Motor neuron (in vitro differentiated cells): ENCODE measurements at regions of chr5 and their contacts with region 1.

Region 1: DNA sequence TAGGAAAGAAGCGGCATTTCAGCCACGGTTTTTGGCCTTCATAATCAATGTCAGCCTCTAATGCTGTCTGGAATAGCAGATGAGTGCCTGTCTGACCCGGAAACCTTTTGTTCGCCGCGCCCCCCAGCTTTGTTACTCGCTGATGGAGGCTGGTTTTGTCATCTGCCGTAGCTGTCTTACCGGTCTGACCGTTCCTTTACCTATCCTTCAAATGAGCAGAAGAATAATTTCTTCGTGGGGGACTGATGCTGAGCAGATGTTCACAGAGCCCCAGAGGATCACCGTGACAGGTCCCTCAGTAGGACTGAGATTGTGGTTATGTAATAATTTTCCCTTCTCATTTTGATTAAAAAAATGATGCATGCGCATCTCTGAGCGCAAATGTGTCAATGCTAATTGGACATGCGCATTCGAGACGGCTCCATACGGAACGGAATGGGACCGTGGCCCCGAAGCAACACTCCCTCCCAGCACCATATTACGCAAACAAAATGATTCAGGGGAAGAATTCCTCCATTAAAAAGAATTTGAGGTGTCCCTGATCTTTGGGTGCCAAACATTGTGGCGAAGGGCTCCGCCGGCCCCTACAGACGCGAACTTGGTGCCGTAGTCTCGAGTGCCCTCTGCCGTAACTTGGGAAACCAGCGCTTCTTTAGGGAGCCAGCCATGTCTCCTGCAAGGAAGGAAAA is 27.6 kb downstream of the TLX3 start:
- ATAC-seq: peak; percentile 60 to 98 (median 88)
- H3K4me3 ChIP-seq: peak overlapping the region; percentile 25 to 41 (median 35)
- H3K27ac ChIP-seq: no peak overlapping the region
- H3K4me1 ChIP-seq: peaks cover 0 to 5% of the 10 kb centered on the region in 2 donors

Region 2: GRCh38 chr5:171031977-171032376 is 304.7 kb before region 1 on chr5:
- in situ Hi-C with region 1: no loop called
- ATAC-seq: peak in 5 of 8 experiments; percentile 83 to 89 (median 86)
- H3K4me3 ChIP-seq: no peak overlapping the region
- H3K27ac ChIP-seq: no peak overlapping the region
- H3K4me1 ChIP-seq: peaks cover 0 to 42% of the 10 kb centered on the region in 2 donors

Region 3: GRCh38 chr5:171207256-171207847 is 129.3 kb before region 1 on chr5:
- in situ Hi-C with region 1: loop called in 1 of 9 experiments (anchors 10 kb)
- ATAC-seq: peak in 3 of 8 experiments; percentile 59 to 66 (median 65)
- H3K4me3 ChIP-seq: no peak overlapping the region
- H3K27ac ChIP-seq: no peak overlapping the region
- H3K4me1 ChIP-seq: peaks cover 0 to 16% of the 10 kb centered on the region in 2 donors

Region 4: GRCh38 chr5:171484460-171484899 is 147.8 kb after region 1 on chr5:
- in situ Hi-C with region 1: no loop called
- ATAC-seq: peak in 3 of 8 experiments; percentile 33 to 69 (median 60)
- H3K4me3 ChIP-seq: no peak overlapping the region
- H3K27ac ChIP-seq: no peak overlapping the region
- H3K4me1 ChIP-seq: no peaks in the 10 kb centered on the region